ENCODE measurements at regions of chr2 and their contacts with region 1.

Region 1: GRCh38 chr2:181305301-181306123 is 151.7 kb upstream of the ITGA4 start:
- DNase-seq: peak; percentile 58 to 94 (median 89)
- H3K4me3 ChIP-seq: peak overlapping the region in 6 of 7 experiments; percentile 1 to 50 (median 28)
- H3K27ac ChIP-seq: peak overlapping the region; percentile 78 to 97
- H3K4me1 ChIP-seq: peaks cover 44 to 89% (median 74%) of the 10 kb centered on the region in 4 experiments
- H3K27me3 ChIP-seq: no peaks in the 10 kb centered on the region

Region 2: GRCh38 chr2:181104512-181105115 is 200.9 kb before region 1 on chr2:
- CTCF ChIA-PET with region 1: interaction called, 11 read pairs
- POLR2A ChIA-PET with region 1: no interaction called
- DNase-seq: peak; percentile 60 to 71 (median 62)
- H3K4me3 ChIP-seq: peak overlapping the region in 2 of 7 experiments; percentile 8 to 53
- H3K27ac ChIP-seq: no peak overlapping the region
- H3K4me1 ChIP-seq: peaks cover 3 to 25% (median 9%) of the 10 kb centered on the region in 4 experiments
- H3K27me3 ChIP-seq: no peaks in the 10 kb centered on the region

Region 3: DNA sequence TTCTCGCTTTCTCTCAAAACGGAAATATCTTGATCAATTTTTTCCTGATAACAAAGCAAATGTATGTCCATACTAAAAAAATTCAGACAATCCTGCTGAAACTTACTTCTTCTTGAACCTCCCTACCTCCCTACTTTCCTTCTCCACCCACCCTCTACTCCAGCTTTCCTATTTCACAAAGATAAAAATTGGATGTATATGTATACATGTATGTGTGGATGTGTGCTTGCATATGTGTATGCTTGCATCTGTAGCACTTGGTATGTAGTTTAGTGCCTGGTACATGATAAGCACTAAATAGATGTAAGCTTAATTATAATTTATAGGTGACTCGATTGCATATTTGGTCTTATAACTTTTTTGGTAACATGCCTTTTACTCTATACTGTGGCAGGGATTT is 15.8 kb before region 1 on chr2:
- CTCF ChIA-PET with region 1: no interaction called
- POLR2A ChIA-PET with region 1: no interaction called
- DNase-seq: peak in 1 of 3 donors; percentile 19
- H3K4me3 ChIP-seq: no peak overlapping the region
- H3K27ac ChIP-seq: no peak overlapping the region
- H3K4me1 ChIP-seq: no peaks in the 10 kb centered on the region
- H3K27me3 ChIP-seq: no peaks in the 10 kb centered on the region

Region 4: GRCh38 chr2:181319286-181319685 is 13.8 kb after region 1 on chr2:
- CTCF ChIA-PET with region 1: interaction called, 10 read pairs
- POLR2A ChIA-PET with region 1: interaction called, 3 read pairs
- DNase-seq: no peak
- H3K4me3 ChIP-seq: no peak overlapping the region
- H3K27ac ChIP-seq: no peak overlapping the region
- H3K4me1 ChIP-seq: peaks cover 0 to 4% (median 3%) of the 10 kb centered on the region in 4 experiments
- H3K27me3 ChIP-seq: no peaks in the 10 kb centered on the region

Region 5: DNA sequence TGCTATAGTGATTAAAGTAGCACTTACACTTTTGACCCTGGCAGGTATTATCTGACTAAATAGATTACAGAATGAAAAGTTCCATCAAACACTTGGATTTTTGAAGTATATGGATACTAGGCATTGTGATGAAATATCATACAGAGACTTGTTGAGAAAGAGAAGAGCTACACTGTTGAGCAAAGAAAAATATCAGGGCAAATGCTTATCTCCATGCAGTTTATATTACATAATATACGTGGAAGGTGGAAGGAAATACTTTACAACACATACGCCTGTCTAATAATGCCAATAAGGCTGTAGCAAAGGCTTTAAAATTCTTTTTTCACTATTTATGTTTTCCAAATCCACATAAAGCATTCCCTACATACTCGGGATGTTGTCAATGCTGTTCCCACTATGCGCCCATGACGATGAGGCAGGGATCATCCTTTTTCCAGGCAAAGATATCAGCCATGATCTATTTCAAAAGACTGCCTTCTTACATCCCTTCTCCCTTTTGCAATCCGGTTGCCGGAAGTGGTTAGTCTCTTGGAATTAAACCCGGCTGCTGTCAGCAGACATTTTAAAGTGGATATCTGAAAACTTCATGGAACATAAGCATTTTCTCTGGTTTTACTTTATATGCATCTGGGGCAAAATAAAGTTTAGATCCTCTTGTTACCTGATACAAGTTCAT is 59.1 kb after region 1 on chr2:
- CTCF ChIA-PET with region 1: no interaction called
- POLR2A ChIA-PET with region 1: no interaction called
- DNase-seq: no peak
- H3K4me3 ChIP-seq: no peak overlapping the region
- H3K27ac ChIP-seq: no peak overlapping the region
- H3K4me1 ChIP-seq: peaks cover 0 to 7% (median 3%) of the 10 kb centered on the region in 4 experiments
- H3K27me3 ChIP-seq: no peaks in the 10 kb centered on the region

Region 6: GRCh38 chr2:181393472-181393871 is 88.0 kb after region 1 on chr2:
- CTCF ChIA-PET with region 1: no interaction called
- POLR2A ChIA-PET with region 1: no interaction called
- DNase-seq: peak; percentile 82 to 93 (median 87)
- H3K4me3 ChIP-seq: peak overlapping the region in 3 of 7 experiments; percentile 8 to 55 (median 46)
- H3K27ac ChIP-seq: peak overlapping the region; percentile 75 to 90
- H3K4me1 ChIP-seq: peaks cover 10 to 37% (median 26%) of the 10 kb centered on the region in 4 experiments
- H3K27me3 ChIP-seq: no peaks in the 10 kb centered on the region

Region 7: DNA sequence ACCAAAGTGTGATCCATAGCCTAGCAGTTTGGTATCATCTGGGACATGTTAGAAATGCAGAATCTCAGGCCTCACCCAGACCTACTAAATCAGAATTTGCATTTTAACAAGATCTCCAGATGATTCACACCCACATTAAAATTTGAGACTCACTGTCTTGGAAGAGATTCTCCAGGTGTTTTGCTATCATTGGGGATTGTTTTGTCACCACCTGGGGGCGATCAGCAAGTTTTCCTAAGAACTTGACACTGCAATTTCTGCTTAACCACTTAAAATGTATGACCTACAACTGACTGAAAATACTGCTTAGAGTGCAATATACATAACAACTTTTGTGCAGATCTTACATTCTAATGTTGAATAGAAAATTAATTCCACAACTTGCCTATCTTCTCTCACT is 132.7 kb after region 1 on chr2:
- CTCF ChIA-PET with region 1: interaction called, 11 read pairs
- POLR2A ChIA-PET with region 1: no interaction called
- DNase-seq: peak; percentile 38 to 54 (median 46)
- H3K4me3 ChIP-seq: no peak overlapping the region
- H3K27ac ChIP-seq: no peak overlapping the region
- H3K4me1 ChIP-seq: peaks cover 10 to 34% (median 13%) of the 10 kb centered on the region in 4 experiments
- H3K27me3 ChIP-seq: no peaks in the 10 kb centered on the region

Region 8: DNA sequence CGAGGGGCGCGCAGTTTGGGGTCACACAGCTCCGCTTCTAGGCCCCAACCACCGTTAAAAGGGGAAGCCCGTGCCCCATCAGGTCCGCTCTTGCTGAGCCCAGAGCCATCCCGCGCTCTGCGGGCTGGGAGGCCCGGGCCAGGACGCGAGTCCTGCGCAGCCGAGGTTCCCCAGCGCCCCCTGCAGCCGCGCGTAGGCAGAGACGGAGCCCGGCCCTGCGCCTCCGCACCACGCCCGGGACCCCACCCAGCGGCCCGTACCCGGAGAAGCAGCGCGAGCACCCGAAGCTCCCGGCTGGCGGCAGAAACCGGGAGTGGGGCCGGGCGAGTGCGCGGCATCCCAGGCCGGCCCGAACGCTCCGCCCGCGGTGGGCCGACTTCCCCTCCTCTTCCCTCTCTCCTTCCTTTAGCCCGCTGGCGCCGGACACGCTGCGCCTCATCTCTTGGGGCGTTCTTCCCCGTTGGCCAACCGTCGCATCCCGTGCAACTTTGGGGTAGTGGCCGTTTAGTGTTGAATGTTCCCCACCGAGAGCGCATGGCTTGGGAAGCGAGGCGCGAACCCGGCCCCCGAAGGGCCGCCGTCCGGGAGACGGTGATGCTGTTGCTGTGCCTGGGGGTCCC is 151.7 kb after region 1 on chr2 and contains the start of gene ITGA4:
- CTCF ChIA-PET with region 1: interaction called, 143 read pairs
- POLR2A ChIA-PET with region 1: interaction called, 19 read pairs
- DNase-seq: peak; percentile 94 to 98 (median 97)
- H3K4me3 ChIP-seq: peak within 1 kb of the TSS; percentile 85 to 100 (median 98)
- H3K27ac ChIP-seq: peak within 1 kb of the TSS; percentile 93 to 97
- H3K4me1 ChIP-seq: peaks cover 31 to 51% (median 35%) of the 10 kb centered on the region in 4 experiments
- H3K27me3 ChIP-seq: no peaks in the 10 kb centered on the region

Region 9: GRCh38 chr2:181466661-181467576 is 161.4 kb after region 1 on chr2:
- CTCF ChIA-PET with region 1: interaction called, 38 read pairs
- POLR2A ChIA-PET with region 1: no interaction called
- DNase-seq: peak; percentile 82 to 88 (median 87)
- H3K4me3 ChIP-seq: peak overlapping the region in 3 of 7 experiments; percentile 7 to 20 (median 10)
- H3K27ac ChIP-seq: peak overlapping the region in 1 of 2 experiments; percentile 71
- H3K4me1 ChIP-seq: peaks cover 37 to 87% (median 66%) of the 10 kb centered on the region in 4 experiments
- H3K27me3 ChIP-seq: no peaks in the 10 kb centered on the region

Region 10: GRCh38 chr2:181677912-181678586 is 372.5 kb after region 1 on chr2:
- CTCF ChIA-PET with region 1: no interaction called
- POLR2A ChIA-PET with region 1: no interaction called
- DNase-seq: peak; percentile 81 to 93 (median 93)
- H3K4me3 ChIP-seq: no peak overlapping the region
- H3K27ac ChIP-seq: no peak overlapping the region
- H3K4me1 ChIP-seq: peaks cover 4 to 22% (median 20%) of the 10 kb centered on the region in 4 experiments
- H3K27me3 ChIP-seq: peaks cover 34 to 86% (median 63%) of the 10 kb centered on the region in 5 experiments

Measured in common myeloid progenitor, CD34-positive (primary cell).